A549 (cell line): ENCODE measurements at regions of chr19 and their contacts with region 1.

Region 1: DNA sequence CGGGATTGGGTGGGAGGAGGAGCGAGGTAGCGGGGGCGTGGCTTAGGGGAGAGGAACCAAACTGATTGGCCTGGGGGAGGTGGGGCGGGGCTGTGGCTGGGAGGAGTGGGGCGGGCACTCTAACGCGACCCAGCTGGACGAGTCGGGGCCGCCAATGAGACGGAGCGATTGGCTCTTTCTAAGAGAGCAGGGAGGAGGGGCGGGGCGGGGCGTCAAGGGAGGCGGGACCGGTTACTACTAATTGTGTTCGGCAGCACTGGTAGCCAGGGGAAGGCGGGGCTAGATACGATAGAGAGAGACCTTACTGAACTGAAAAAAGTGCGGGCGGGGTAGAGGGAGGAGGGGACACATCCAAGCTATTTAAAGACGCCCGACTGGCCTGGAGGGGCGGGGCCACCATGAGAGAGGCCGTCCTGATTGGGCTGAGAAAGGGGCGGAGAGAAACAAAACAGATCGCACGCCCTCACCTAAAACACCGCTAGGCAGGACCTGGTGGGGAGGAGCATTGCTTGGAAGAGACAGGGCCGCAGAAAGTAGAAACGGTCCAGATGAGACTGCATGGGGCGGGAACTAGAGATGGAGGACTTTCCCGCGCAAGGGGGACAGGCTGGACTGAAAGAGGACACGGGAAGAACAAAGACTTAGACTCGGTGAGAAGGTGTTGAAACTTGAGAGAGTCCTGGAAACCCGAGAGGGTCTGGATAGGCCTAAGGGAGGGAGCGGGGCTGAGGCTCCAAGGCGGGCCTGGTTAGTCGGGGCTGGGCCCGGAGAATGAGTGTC is at the start of gene KCNC3:
- DNase-seq: peak; percentile 99 to 100
- ATAC-seq: peak; percentile 54 to 83
- H3K4me3 ChIP-seq: peak within 1 kb of the TSS; percentile 60
- H3K27ac ChIP-seq: peak within 1 kb of the TSS; percentile 50 to 75; a peak in 5 of 6 replicates
- H3K4me1 ChIP-seq: peaks cover 45% of the 10 kb centered on the region
- CTCF ChIP-seq: no peak
- EP300 ChIP-seq: no peak
- POLR2A ChIP-seq: no peak; the same call in 1 of the 2 replicates
- RAD21 ChIP-seq: no peak
- polyA plus RNA-seq, gene KCNC3: 0.17 and 0.32 TPM in 2 replicates

Region 2: DNA sequence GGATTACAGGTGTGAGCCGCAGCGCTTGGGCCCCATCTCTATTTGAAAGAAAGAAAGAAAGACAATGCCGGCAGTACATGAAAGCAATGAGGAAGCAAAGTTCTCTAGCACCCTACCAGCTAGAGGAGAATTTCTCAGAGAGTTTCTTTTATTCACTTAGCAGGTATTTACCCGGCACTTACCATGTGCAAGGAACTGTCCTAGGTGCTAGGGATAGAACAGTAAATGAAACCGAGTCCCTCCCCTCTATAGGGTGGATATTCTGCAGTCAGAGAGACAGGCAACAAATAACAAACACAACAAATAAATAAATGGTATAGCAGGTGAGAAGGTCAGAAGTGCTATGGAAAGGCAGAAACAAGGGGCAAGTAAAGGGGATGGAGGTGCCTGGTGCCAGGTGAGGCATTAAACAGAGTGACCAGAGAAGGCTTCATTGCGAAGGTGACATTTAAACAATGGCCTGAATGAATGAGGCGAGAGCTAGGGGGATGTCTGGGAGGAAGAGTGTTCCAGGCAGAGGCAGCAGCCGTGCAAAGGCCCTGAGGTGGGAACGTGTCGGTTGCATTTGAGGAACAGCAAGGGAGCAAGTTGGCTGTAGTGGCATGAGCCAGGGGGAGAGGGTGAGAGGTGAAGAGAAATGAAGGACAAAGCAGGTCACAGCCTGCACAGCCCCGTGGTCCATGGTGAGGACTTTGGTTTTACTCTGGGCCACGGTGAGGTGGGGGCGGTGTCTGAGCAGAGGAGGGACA is 136.7 kb before region 1 on chr19:
- CTCF ChIA-PET with region 1: interaction called, 7 read pairs
- POLR2A ChIA-PET with region 1: interaction called, 10 read pairs
- DNase-seq: no peak
- ATAC-seq: peak; percentile 16 to 22; a peak in 2 of 6 replicates
- H3K4me3 ChIP-seq: no peak overlapping the region
- H3K27ac ChIP-seq: no peak overlapping the region
- H3K4me1 ChIP-seq: no peaks in the 10 kb centered on the region
- CTCF ChIP-seq: no peak
- EP300 ChIP-seq: no peak
- POLR2A ChIP-seq: no peak
- RAD21 ChIP-seq: no peak

Region 3: GRCh38 chr19:50315773-50316448 is 13.4 kb before region 1 on chr19:
- CTCF ChIA-PET with region 1: interaction called, 15 read pairs
- POLR2A ChIA-PET with region 1: interaction called, 23 read pairs
- DNase-seq: peak; percentile 68 to 76
- ATAC-seq: peak; percentile 49 to 77; a peak in 5 of 6 replicates
- H3K4me3 ChIP-seq: peak overlapping the region; percentile 46
- H3K27ac ChIP-seq: peak overlapping the region; percentile 70 to 82
- H3K4me1 ChIP-seq: peaks cover 23% of the 10 kb centered on the region
- CTCF ChIP-seq: no peak
- EP300 ChIP-seq: no peak
- POLR2A ChIP-seq: peak; percentile 28; the same call in 1 of the 2 replicates
- RAD21 ChIP-seq: no peak

Region 4: GRCh38 chr19:50398675-50399367 is 69.5 kb after region 1 on chr19:
- CTCF ChIA-PET with region 1: no interaction called
- POLR2A ChIA-PET with region 1: no interaction called
- DNase-seq: no peak
- ATAC-seq: peak in 1 of 2 experiments; percentile 34; a peak in 3 of 6 replicates
- H3K4me3 ChIP-seq: no peak overlapping the region
- H3K27ac ChIP-seq: no peak overlapping the region
- H3K4me1 ChIP-seq: no peaks in the 10 kb centered on the region
- CTCF ChIP-seq: no peak
- EP300 ChIP-seq: no peak
- POLR2A ChIP-seq: no peak
- RAD21 ChIP-seq: no peak